PC-9 (cell line): ENCODE measurements at regions of chr1 and their contacts with region 1.

Region 1: GRCh38 chr1:12511516-12512468 is 106.2 kb downstream of the DHRS3 start:
- DNase-seq: no peak
- H3K4me3 ChIP-seq: no peak overlapping the region
- H3K27ac ChIP-seq: no peak overlapping the region
- H3K4me1 ChIP-seq: no peaks in the 10 kb centered on the region
- H3K27me3 ChIP-seq: no peaks in the 10 kb centered on the region
- CTCF ChIP-seq: no peak

Region 2: DNA sequence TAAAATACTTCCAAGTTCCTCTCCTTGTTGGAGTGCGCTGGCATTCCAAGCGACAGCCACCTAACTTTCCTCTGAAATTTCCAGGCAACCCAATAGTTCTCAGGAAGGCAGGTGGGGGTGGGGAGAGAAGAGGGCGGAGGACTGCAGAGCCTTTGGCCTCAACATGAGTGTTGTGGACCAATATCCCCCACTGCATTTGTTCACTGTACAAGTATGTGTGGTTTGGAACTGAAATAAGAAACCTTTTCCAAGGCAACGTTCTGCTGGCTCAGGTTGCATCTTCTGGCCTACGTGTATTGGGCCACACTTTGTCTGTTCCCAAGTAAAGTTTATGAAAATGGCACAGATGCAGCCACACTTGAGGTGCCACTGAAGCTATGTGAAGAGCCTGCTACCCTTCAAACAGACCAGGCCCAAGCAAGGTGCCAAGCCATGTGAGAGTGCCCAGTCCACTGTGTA is 47.2 kb before region 1 on chr1:
- CTCF ChIA-PET with region 1: no interaction called
- POLR2A ChIA-PET with region 1: interaction called, 13 read pairs
- intact Hi-C with region 1: no loop called
- DNase-seq: peak; percentile 37 to 55
- H3K4me3 ChIP-seq: no peak overlapping the region
- H3K27ac ChIP-seq: no peak overlapping the region
- H3K4me1 ChIP-seq: peaks cover 25% of the 10 kb centered on the region
- H3K27me3 ChIP-seq: no peaks in the 10 kb centered on the region
- CTCF ChIP-seq: no peak

Region 3: GRCh38 chr1:12596007-12596821 is 84.4 kb after region 1 on chr1:
- CTCF ChIA-PET with region 1: no interaction called
- POLR2A ChIA-PET with region 1: no interaction called
- intact Hi-C with region 1: no loop called
- DNase-seq: peak; percentile 90 to 95
- H3K4me3 ChIP-seq: peak overlapping the region; percentile 56; the same call in 1 of the 2 replicates
- H3K27ac ChIP-seq: peak overlapping the region; percentile 100
- H3K4me1 ChIP-seq: peaks cover 68% of the 10 kb centered on the region
- H3K27me3 ChIP-seq: no peaks in the 10 kb centered on the region
- CTCF ChIP-seq: no peak

Region 4: GRCh38 chr1:12722626-12723025 is 210.8 kb after region 1 on chr1:
- CTCF ChIA-PET with region 1: no interaction called
- POLR2A ChIA-PET with region 1: no interaction called
- intact Hi-C with region 1: no loop called
- DNase-seq: no peak
- H3K4me3 ChIP-seq: no peak overlapping the region
- H3K27ac ChIP-seq: no peak overlapping the region
- H3K4me1 ChIP-seq: no peaks in the 10 kb centered on the region
- H3K27me3 ChIP-seq: peaks cover 9% of the 10 kb centered on the region; the same call in 1 of the 2 replicates
- CTCF ChIP-seq: no peak